Activated CD8-positive, alpha-beta T cell treated with anti-CD3 and anti-CD28 coated beads, Interleukin-2, amount 10 ng/mL, durations not matched to agents 7 days and 5 days (primary cell): ENCODE measurements at regions of chr1 and their contacts with region 1.

Region 1: GRCh38 chr1:17075470-17076255 is 21.8 kb upstream of the SDHB start:
- DNase-seq: peak; percentile 57
- ATAC-seq: peak; percentile 64
- H3K4me3 Mint-ChIP-seq: no peak overlapping the region
- H3K27ac Mint-ChIP-seq: peak overlapping the region; percentile 63
- H3K4me1 Mint-ChIP-seq: peaks cover 4% of the 10 kb centered on the region
- H3K27me3 Mint-ChIP-seq: peaks cover 4% of the 10 kb centered on the region

Region 2: GRCh38 chr1:17045634-17046333 is 29.9 kb before region 1 on chr1:
- CTCF ChIA-PET with region 1: no interaction called
- POLR2A ChIA-PET with region 1: no interaction called
- DNase-seq: no peak
- ATAC-seq: no peak
- H3K4me3 Mint-ChIP-seq: no peak overlapping the region
- H3K27ac Mint-ChIP-seq: peak overlapping the region; percentile 61
- H3K4me1 Mint-ChIP-seq: peaks cover 21% of the 10 kb centered on the region
- H3K27me3 Mint-ChIP-seq: no peaks in the 10 kb centered on the region

Region 3: GRCh38 chr1:17059739-17060460 is 15.8 kb before region 1 on chr1:
- CTCF ChIA-PET with region 1: interaction called, 27 read pairs
- POLR2A ChIA-PET with region 1: no interaction called
- DNase-seq: peak; percentile 61
- ATAC-seq: peak; percentile 92
- H3K4me3 Mint-ChIP-seq: no peak overlapping the region
- H3K27ac Mint-ChIP-seq: no peak overlapping the region
- H3K4me1 Mint-ChIP-seq: peaks cover 10% of the 10 kb centered on the region
- H3K27me3 Mint-ChIP-seq: peaks cover 12% of the 10 kb centered on the region

Region 4: DNA sequence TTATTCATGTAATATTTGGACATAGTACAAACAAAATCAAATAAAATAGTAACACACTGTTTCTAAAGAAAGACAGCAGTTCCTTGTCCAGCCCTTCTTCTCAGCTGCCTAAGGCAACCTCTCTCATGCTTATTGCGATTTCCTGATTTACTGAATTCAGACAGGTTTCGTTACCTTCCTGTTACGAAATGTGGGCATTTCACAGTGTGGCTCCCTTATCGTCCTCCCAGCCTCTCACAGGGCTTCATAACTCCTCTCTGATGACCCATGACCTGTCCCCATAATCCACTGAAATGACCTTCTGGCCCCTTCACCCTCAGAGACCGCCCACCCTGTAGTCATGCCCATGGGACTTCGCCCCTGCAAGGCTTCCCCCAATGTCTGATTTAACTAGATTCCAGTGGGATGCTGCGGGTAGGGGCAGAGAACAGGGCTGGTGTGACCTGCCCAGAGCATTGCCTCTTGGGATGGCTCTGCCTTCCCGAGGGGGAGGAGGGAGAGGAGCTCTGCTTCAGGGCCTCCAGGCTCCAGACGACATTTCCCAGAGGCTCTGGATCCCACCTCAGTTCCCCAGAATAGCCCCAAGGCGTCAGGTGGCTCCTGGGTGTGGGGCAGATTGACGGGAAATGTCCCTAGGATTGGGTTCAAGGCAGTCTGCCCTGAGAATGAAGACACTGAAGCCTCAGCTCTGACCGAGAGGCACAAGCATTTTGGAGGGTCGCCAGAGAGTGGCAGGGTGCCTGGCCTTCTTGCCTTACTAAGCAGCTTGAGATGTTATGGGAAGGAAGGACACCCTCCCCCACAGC is 23.0 kb after region 1 on chr1:
- CTCF ChIA-PET with region 1: no interaction called
- POLR2A ChIA-PET with region 1: no interaction called
- DNase-seq: no peak
- ATAC-seq: no peak
- H3K4me3 Mint-ChIP-seq: no peak overlapping the region
- H3K27ac Mint-ChIP-seq: no peak overlapping the region
- H3K4me1 Mint-ChIP-seq: no peaks in the 10 kb centered on the region
- H3K27me3 Mint-ChIP-seq: no peaks in the 10 kb centered on the region